GM12878 (cell line): ENCODE measurements at regions of chr10 and their contacts with region 1.

Region 1: DNA sequence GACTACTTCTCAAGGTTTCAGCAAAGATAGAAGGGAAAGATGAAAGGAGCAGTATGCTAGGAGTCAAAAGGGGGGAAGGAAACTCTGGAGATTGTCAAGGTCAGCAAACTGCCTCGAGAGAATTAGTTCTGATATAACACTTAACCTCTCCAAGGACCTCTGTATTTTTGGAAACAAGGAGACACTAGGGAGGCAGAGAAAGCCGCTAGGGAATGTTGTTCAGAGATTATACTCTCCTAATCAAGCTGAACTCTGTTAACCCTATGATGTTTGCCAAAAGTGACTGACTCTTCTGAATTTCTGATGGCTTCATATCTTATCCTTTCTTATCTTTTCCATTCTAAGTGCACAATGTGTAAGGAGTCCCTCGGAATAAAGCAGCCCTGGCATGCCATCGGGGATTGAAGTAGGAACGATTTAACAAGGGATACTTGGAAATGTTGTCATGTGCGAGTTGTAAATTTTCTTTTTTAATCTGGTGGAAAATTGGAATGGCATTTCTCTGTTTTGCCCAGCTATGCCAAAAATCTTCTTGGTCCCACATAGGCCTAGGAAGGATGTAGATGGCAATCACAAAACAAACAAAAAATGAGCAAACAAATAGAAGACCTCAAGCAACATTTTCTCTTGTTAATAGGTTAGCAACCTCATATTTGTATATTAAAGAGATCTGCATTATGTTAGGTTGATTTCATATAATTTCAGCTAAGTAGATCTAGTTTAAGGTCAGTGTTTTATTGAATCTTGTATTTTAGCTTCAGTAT is 27.3 kb downstream of the CREM start:
- DNase-seq: no peak
- ATAC-seq: no peak
- H3K4me3 ChIP-seq: no peak overlapping the region
- H3K27ac ChIP-seq: no peak overlapping the region
- H3K4me1 ChIP-seq: peaks cover 22% of the 10 kb centered on the region
- H3K27me3 ChIP-seq: no peaks in the 10 kb centered on the region
- CTCF ChIP-seq: no peak
- EP300 ChIP-seq: no peak
- POLR2A ChIP-seq: no peak
- RAD21 ChIP-seq: no peak

Region 2: DNA sequence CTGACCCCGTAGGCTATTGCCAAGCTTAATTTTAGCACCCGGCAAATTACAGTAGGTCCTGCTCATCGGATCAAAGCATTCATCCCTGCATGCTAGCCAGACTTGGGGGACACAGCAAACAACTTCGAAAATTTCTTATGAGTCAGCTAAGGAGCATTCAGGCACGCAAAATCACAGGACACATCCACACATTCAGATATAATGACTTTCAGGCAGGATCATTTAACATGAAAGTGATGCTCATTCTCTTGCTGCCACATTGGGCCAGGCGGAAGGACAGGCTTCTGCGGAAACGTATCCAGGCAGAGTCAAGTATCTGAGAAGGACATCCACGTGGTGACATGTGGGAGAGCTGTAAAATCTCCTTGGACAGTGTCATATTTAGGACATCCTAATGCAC is 1345.4 kb before region 1 on chr10:
- CTCF ChIA-PET with region 1: no interaction called
- POLR2A ChIA-PET with region 1: no interaction called
- RAD21 ChIA-PET with region 1: no interaction called
- SMC1A ChIA-PET with region 1: no interaction called
- in situ Hi-C with region 1: no loop called
- intact Hi-C with region 1: no loop called
- DNase-seq: no peak
- ATAC-seq: no peak
- H3K4me3 ChIP-seq: no peak overlapping the region
- H3K27ac ChIP-seq: no peak overlapping the region
- H3K4me1 ChIP-seq: no peaks in the 10 kb centered on the region
- H3K27me3 ChIP-seq: no peaks in the 10 kb centered on the region
- CTCF ChIP-seq: no peak
- EP300 ChIP-seq: no peak
- POLR2A ChIP-seq: no peak
- RAD21 ChIP-seq: no peak

Region 3: GRCh38 chr10:35136263-35136815 is 17.6 kb before region 1 on chr10:
- CTCF ChIA-PET with region 1: interaction called, 39 read pairs
- POLR2A ChIA-PET with region 1: interaction called, 18 read pairs
- RAD21 ChIA-PET with region 1: interaction called, 41 read pairs
- SMC1A ChIA-PET with region 1: interaction called, 50 read pairs
- in situ Hi-C with region 1: no loop called
- intact Hi-C with region 1: loop called (anchors 1 kb)
- DNase-seq: peak; percentile 66
- ATAC-seq: peak; percentile 83
- H3K4me3 ChIP-seq: peak overlapping the region; percentile 18; the same call in 1 of the 2 replicates
- H3K27ac ChIP-seq: peak overlapping the region; percentile 83
- H3K4me1 ChIP-seq: peaks cover 28% of the 10 kb centered on the region
- H3K27me3 ChIP-seq: no peaks in the 10 kb centered on the region
- CTCF ChIP-seq: no peak
- EP300 ChIP-seq: peak; percentile 39 to 83; a peak in 2 of 4 replicates
- POLR2A ChIP-seq: no peak
- RAD21 ChIP-seq: no peak

Region 4: GRCh38 chr10:36094096-36094495 is 940.2 kb after region 1 on chr10:
- CTCF ChIA-PET with region 1: no interaction called
- POLR2A ChIA-PET with region 1: no interaction called
- RAD21 ChIA-PET with region 1: no interaction called
- SMC1A ChIA-PET with region 1: no interaction called
- in situ Hi-C with region 1: no loop called
- intact Hi-C with region 1: no loop called
- DNase-seq: no peak
- ATAC-seq: no peak
- H3K4me3 ChIP-seq: no peak overlapping the region
- H3K27ac ChIP-seq: no peak overlapping the region
- H3K4me1 ChIP-seq: no peaks in the 10 kb centered on the region
- H3K27me3 ChIP-seq: no peaks in the 10 kb centered on the region
- CTCF ChIP-seq: no peak
- EP300 ChIP-seq: no peak
- POLR2A ChIP-seq: no peak
- RAD21 ChIP-seq: no peak